Right ventricle myocardium superior (tissue), 1 donor: ENCODE measurements at regions of chr2 and their contacts with region 1.

Region 1: GRCh38 chr2:199704358-199705238 is 146.4 kb downstream of the FTCDNL1 start:
- DNase-seq: no peak
- ATAC-seq: peak; percentile 52

Region 2: GRCh38 chr2:199861132-199861774 is 156.7 kb after region 1 on chr2:
- intact Hi-C with region 1: loop called (anchors 5 kb)
- DNase-seq: no peak
- ATAC-seq: no peak